AG04449 (cell line): ENCODE measurements at regions of chr13 and their contacts with region 1.

Region 1: DNA sequence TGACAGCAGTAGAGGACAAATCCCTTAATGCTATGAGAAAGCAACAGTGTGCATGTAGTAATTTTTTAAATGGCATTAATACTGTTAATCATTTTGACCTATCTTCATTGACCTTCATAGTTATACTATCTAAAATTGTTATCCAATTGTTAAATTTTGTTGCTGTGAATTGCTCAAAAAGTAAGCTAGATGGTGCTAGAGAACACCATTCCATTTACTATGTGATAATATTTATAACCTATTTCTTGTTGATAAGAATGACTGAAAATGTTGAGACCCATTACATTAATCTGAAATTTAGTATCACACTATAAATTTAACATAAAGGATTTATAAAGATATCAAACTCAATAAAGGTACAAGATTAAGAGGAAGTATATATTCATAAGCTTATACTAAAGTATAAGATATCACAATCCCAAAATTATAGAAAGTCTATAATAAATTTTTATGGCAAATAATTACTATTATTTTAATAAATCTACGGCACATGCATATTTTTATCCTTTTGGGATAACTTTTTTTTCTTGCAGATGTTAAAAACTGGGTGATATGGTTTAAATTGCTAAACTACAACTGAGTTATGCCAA is 1573.3 kb downstream of the PCDH9 start:
- DNase-seq: no peak
- H3K4me3 ChIP-seq: no peak overlapping the region
- CTCF ChIP-seq: peak; percentile 32

Region 2: DNA sequence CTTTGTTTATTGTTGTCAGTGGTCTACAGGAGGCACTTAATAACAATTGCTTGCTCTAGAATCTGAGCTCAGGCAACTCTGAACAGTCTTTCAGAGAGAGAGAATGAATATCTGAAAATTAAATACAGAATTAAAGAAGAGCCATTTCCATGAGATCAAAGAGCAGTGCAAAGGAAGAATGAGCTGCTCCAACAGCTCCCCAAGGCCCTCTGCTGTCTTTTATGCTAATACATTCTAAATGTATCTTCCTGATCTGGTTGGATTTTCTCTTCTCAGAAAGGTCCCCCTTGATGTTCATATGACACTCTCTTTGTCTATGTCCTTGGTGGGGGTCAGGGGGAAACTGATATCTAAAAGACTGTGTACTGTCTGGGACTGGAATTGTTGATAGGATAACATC is 543.7 kb after region 1 on chr13:
- CTCF ChIA-PET with region 1: interaction called, 13 read pairs
- POLR2A ChIA-PET with region 1: no interaction called
- DNase-seq: no peak
- H3K4me3 ChIP-seq: no peak overlapping the region
- CTCF ChIP-seq: peak; percentile 11